ENCODE measurements at regions of chr2 and their contacts with region 1.

Region 1: DNA sequence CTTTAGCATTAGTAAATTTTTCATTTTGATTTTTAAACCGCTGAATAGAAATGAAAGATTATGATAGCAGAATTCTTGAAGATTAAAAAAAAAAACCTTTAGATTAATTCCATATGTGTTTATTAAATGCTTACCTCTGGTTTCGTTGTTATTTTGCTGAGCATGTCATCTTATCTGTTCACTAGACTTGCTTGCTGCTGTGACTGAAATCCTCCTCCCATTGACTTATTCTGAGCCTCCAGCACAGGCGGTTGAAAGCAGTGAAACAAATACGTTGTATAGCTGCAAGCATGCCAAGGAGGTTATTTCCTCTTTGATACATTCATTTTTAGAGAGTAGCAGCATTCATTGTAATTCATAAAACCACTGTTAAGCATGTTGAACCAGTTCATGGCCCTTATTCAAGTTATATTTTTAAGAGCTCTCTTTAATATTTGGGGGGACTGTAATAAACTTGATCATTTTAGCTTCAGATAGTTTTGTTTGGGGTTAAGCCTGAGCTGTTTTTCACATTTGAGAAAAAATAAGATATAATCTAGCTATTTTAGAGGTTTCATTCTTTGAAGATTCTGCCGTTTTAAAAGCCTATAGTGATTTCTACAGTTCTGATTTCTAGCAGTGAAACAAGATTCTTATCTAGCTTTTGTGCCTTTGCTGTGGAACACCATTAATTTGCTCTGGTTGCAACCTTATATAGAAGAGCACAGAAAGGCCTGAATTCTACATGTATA is at the start of gene HTR2B:
- DNase-seq: peak; percentile 60
- ATAC-seq: peak; percentile 96
- H3K4me3 Mint-ChIP-seq: peak within 1 kb of the TSS; percentile 60
- H3K27ac Mint-ChIP-seq: peak within 1 kb of the TSS; percentile 75
- H3K4me1 Mint-ChIP-seq: peaks cover 35% of the 10 kb centered on the region
- H3K27me3 Mint-ChIP-seq: no peaks in the 10 kb centered on the region
- total RNA-seq, gene HTR2B: 0.11 TPM

Region 2: GRCh38 chr2:231181860-231182512 is 57.0 kb after region 1 on chr2:
- CTCF ChIA-PET with region 1: no interaction called
- POLR2A ChIA-PET with region 1: interaction called, 10 read pairs
- intact Hi-C with region 1: no loop called
- DNase-seq: no peak
- ATAC-seq: no peak
- H3K4me3 Mint-ChIP-seq: no peak overlapping the region
- H3K27ac Mint-ChIP-seq: no peak overlapping the region
- H3K4me1 Mint-ChIP-seq: peaks cover 13% of the 10 kb centered on the region
- H3K27me3 Mint-ChIP-seq: no peaks in the 10 kb centered on the region

Measured in activated CD4-positive, alpha-beta T cell treated with anti-CD3 and anti-CD28 coated beads for 36 hours (primary cell).